CD8-positive, alpha-beta T cell (primary cell): ENCODE measurements at regions of chr17 and their contacts with region 1.

Region 1: GRCh38 chr17:44775136-44775837 is 16.5 kb downstream of the ADAM11 start:
- DNase-seq: peak in 8 of 9 experiments; percentile 92 to 99 (median 98)
- ATAC-seq: peak; percentile 92
- H3K4me3 ChIP-seq: peak overlapping the region; percentile 68 to 97
- H3K4me3 Mint-ChIP-seq: peak overlapping the region; percentile 91
- H3K27ac ChIP-seq: peak overlapping the region in 1 of 2 experiments; percentile 11
- H3K27ac Mint-ChIP-seq: peak overlapping the region; percentile 60
- H3K4me1 ChIP-seq: peaks cover 17% of the 10 kb centered on the region
- H3K4me1 Mint-ChIP-seq: peaks cover 16% of the 10 kb centered on the region
- H3K27me3 ChIP-seq: peaks cover 0 to 10% of the 10 kb centered on the region in 2 experiments
- H3K27me3 Mint-ChIP-seq: peaks cover 7% of the 10 kb centered on the region
- CTCF ChIP-seq: peak; percentile 61

Region 2: DNA sequence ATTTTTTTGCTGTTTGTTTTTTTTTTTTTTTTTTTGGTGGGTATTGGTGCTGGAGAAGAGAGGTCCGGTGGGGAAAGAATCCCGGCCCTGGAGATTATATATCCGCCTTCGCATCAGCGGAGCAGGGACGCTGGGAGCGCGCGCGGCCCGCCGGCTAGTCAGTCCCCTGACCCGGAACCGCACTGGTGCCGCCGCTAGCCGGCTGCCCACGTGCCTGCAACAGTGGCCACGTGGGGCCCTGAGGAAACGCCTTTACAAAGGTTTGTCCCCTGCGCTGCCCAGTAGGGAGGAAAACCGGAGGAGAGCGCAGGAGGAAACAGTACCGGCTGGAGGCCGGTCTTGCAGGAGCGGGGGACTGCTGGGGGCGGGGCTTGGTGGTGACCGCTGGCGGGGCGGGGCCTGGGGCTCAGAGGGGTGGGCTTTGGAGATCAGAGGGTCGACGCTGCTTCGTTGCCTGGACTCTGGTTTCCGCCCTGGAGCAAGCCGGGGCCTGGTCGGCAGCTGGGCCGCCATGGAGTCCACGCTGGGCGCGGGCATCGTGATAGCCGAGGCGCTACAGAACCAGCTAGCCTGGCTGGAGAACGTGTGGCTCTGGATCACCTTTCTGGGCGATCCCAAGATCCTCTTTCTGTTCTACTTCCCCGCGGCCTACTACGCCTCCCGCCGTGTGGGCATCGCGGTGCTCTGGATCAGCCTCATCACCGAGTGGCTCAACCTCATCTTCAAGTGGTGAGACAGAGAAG is 704.7 kb before region 1 on chr17 and contains the start of gene G6PC3:
- CTCF ChIA-PET with region 1: no interaction called
- POLR2A ChIA-PET with region 1: no interaction called
- intact Hi-C with region 1: no loop called
- DNase-seq: peak; percentile 30 to 88 (median 75)
- ATAC-seq: peak; percentile 55
- H3K4me3 ChIP-seq: peak within 1 kb of the TSS; percentile 70 to 84
- H3K4me3 Mint-ChIP-seq: peak within 1 kb of the TSS; percentile 96
- H3K27ac ChIP-seq: peak within 1 kb of the TSS; percentile 62 to 80
- H3K27ac Mint-ChIP-seq: peak within 1 kb of the TSS; percentile 94
- H3K4me1 ChIP-seq: peaks cover 23% of the 10 kb centered on the region
- H3K4me1 Mint-ChIP-seq: peaks cover 34% of the 10 kb centered on the region
- H3K27me3 ChIP-seq: no peaks in the 10 kb centered on the region
- H3K27me3 Mint-ChIP-seq: no peaks in the 10 kb centered on the region
- CTCF ChIP-seq: no peak
- total RNA-seq, gene G6PC3: 4.8 to 5.9 TPM

Region 3: GRCh38 chr17:44689477-44690217 is 85.6 kb before region 1 on chr17 and contains the start of gene CCDC43:
- CTCF ChIA-PET with region 1: interaction called, 3 read pairs
- POLR2A ChIA-PET with region 1: no interaction called
- intact Hi-C with region 1: loop called in 1 of 2 experiments (anchors 5 kb)
- DNase-seq: peak; percentile 86 to 95 (median 92)
- ATAC-seq: peak; percentile 99
- H3K4me3 ChIP-seq: peak within 1 kb of the TSS; percentile 71 to 86
- H3K4me3 Mint-ChIP-seq: peak within 1 kb of the TSS; percentile 98
- H3K27ac ChIP-seq: peak within 1 kb of the TSS; percentile 81 to 90
- H3K27ac Mint-ChIP-seq: peak within 1 kb of the TSS; percentile 96
- H3K4me1 ChIP-seq: peaks cover 16% of the 10 kb centered on the region
- H3K4me1 Mint-ChIP-seq: peaks cover 38% of the 10 kb centered on the region
- H3K27me3 ChIP-seq: no peaks in the 10 kb centered on the region
- H3K27me3 Mint-ChIP-seq: no peaks in the 10 kb centered on the region
- CTCF ChIP-seq: no peak
- total RNA-seq, gene CCDC43: 39.1 TPM

Region 4: DNA sequence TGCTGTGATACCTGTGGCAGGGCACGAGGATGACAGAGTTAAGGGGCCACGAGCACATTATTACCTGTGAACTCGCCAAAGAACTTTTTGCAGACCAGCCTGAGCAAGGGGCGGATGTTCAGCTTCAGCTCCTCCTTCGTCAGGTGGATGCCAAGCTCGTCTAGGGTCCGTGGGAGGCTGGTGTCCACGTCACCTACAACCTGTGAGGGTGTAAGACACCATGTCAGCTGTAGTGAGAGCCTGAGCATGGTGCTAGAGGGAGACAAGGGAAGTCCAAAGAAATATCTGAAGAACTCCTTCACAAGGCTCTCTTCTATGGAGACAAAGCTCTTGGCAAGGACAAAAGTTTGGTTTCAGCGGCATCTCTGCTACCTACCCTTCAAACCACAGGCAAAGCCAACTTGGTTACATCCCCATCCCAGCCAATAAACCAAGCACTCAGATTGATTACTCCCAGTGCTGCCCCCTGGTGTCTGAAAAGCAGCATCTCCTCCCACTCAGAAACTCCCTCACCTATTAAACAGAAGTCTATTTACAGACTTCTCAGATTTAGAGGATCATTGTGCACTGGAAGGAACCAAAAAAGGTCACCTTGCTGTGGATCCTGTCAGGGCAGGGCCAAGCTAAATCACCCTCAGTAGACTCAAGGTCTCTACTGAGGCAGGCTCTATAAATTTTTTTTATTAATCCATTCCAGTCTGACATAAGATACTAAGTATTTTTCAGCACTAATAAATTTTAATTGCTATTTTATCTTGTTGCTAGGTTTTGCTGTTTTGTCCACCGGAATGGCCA is 89.8 kb after region 1 on chr17:
- CTCF ChIA-PET with region 1: interaction called, 309 read pairs
- POLR2A ChIA-PET with region 1: no interaction called
- intact Hi-C with region 1: loop called (anchors 1 kb)
- DNase-seq: peak; percentile 26 to 82 (median 71)
- ATAC-seq: peak; percentile 83
- H3K4me3 ChIP-seq: no peak overlapping the region
- H3K4me3 Mint-ChIP-seq: no peak overlapping the region
- H3K27ac ChIP-seq: no peak overlapping the region
- H3K27ac Mint-ChIP-seq: no peak overlapping the region
- H3K4me1 ChIP-seq: no peaks in the 10 kb centered on the region
- H3K4me1 Mint-ChIP-seq: no peaks in the 10 kb centered on the region
- H3K27me3 ChIP-seq: no peaks in the 10 kb centered on the region
- H3K27me3 Mint-ChIP-seq: no peaks in the 10 kb centered on the region
- CTCF ChIP-seq: peak; percentile 82

Region 5: GRCh38 chr17:44947461-44948314 is 172.4 kb after region 1 on chr17 and contains the start of gene KIF18B:
- CTCF ChIA-PET with region 1: no interaction called
- POLR2A ChIA-PET with region 1: no interaction called
- intact Hi-C with region 1: loop called (anchors 1 kb)
- DNase-seq: peak; percentile 72 to 94 (median 87)
- ATAC-seq: peak; percentile 97
- H3K4me3 ChIP-seq: peak within 1 kb of the TSS; percentile 57 to 68
- H3K4me3 Mint-ChIP-seq: peak within 1 kb of the TSS; percentile 93
- H3K27ac ChIP-seq: peak within 1 kb of the TSS; percentile 47 to 67
- H3K27ac Mint-ChIP-seq: peak within 1 kb of the TSS; percentile 93
- H3K4me1 ChIP-seq: peaks cover 9% of the 10 kb centered on the region
- H3K4me1 Mint-ChIP-seq: peaks cover 13% of the 10 kb centered on the region
- H3K27me3 ChIP-seq: peaks cover 0 to 5% of the 10 kb centered on the region in 2 experiments
- H3K27me3 Mint-ChIP-seq: peaks cover 5% of the 10 kb centered on the region
- CTCF ChIP-seq: no peak
- total RNA-seq, gene KIF18B: 0.11 TPM in 1 of 2 experiments, not detected in the other

Region 6: GRCh38 chr17:45051060-45051719 is 275.9 kb after region 1 on chr17 and contains the start of gene DCAKD:
- CTCF ChIA-PET with region 1: no interaction called
- POLR2A ChIA-PET with region 1: no interaction called
- intact Hi-C with region 1: loop called (anchors 1 kb)
- DNase-seq: peak; percentile 76 to 97 (median 85)
- ATAC-seq: peak; percentile 90
- H3K4me3 ChIP-seq: peak within 1 kb of the TSS; percentile 61 to 82
- H3K4me3 Mint-ChIP-seq: peak within 1 kb of the TSS; percentile 86
- H3K27ac ChIP-seq: peak within 1 kb of the TSS; percentile 78 to 95
- H3K27ac Mint-ChIP-seq: peak within 1 kb of the TSS; percentile 94
- H3K4me1 ChIP-seq: peaks cover 29% of the 10 kb centered on the region
- H3K4me1 Mint-ChIP-seq: peaks cover 36% of the 10 kb centered on the region
- H3K27me3 ChIP-seq: no peaks in the 10 kb centered on the region
- H3K27me3 Mint-ChIP-seq: no peaks in the 10 kb centered on the region
- CTCF ChIP-seq: no peak
- total RNA-seq, gene DCAKD: 8.3 to 8.4 TPM

Region 7: GRCh38 chr17:45148183-45149036 is 373.1 kb after region 1 on chr17 and contains the start of gene HEXIM1:
- CTCF ChIA-PET with region 1: no interaction called
- POLR2A ChIA-PET with region 1: interaction called, 3 read pairs
- intact Hi-C with region 1: loop called in 1 of 2 experiments (anchors 5 kb)
- DNase-seq: peak; percentile 98 to 100 (median 99)
- ATAC-seq: peak; percentile 80
- H3K4me3 ChIP-seq: peak within 1 kb of the TSS; percentile 68 to 80
- H3K4me3 Mint-ChIP-seq: peak within 1 kb of the TSS; percentile 98
- H3K27ac ChIP-seq: peak within 1 kb of the TSS; percentile 84 to 94
- H3K27ac Mint-ChIP-seq: peak within 1 kb of the TSS; percentile 100
- H3K4me1 ChIP-seq: peaks cover 41% of the 10 kb centered on the region
- H3K4me1 Mint-ChIP-seq: peaks cover 54% of the 10 kb centered on the region
- H3K27me3 ChIP-seq: no peaks in the 10 kb centered on the region
- H3K27me3 Mint-ChIP-seq: no peaks in the 10 kb centered on the region
- CTCF ChIP-seq: no peak
- total RNA-seq, gene HEXIM1: 76.5 to 77.2 TPM